ENCODE measurements at regions of chr17 and their contacts with region 1.

Region 1: DNA sequence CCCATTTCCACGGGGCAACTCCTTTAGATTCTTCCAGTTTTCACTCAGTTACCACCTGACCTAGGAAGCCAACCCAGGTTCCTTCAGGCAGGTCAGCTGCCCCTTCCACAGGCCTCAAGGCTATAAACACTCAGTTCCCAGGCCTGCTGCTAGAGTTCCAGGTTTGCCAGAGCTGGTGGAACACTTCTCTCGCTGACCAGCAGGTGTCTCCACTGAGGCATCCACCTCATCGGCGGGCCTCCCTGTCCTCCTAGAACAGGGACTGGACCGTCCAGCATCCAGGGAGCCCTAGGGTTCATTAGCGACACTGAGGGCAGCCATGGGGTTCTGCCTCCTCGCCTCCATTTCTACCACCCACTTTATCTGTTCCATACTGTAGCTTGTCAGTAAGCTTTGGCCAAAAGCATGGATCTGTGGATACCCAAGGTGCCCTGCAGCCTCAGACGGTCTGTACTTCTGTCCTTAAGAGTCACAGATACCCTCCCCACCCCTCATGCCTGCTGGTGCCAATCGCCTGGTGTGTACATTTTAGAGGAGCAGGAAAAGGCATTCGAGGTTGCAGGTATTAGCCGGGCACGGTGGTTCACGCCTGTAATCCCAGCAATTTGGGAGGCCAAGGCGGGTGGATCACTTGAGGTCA is 29.0 kb downstream of the PIMREG start:
- DNase-seq: peak; percentile 72
- H3K4me3 ChIP-seq: no peak overlapping the region
- H3K27ac ChIP-seq: no peak overlapping the region
- H3K4me1 ChIP-seq: peaks cover 15% of the 10 kb centered on the region
- H3K27me3 ChIP-seq: no peaks in the 10 kb centered on the region
- CTCF ChIP-seq: peak; percentile 95 to 97
- POLR2A ChIP-seq: no peak

Region 2: DNA sequence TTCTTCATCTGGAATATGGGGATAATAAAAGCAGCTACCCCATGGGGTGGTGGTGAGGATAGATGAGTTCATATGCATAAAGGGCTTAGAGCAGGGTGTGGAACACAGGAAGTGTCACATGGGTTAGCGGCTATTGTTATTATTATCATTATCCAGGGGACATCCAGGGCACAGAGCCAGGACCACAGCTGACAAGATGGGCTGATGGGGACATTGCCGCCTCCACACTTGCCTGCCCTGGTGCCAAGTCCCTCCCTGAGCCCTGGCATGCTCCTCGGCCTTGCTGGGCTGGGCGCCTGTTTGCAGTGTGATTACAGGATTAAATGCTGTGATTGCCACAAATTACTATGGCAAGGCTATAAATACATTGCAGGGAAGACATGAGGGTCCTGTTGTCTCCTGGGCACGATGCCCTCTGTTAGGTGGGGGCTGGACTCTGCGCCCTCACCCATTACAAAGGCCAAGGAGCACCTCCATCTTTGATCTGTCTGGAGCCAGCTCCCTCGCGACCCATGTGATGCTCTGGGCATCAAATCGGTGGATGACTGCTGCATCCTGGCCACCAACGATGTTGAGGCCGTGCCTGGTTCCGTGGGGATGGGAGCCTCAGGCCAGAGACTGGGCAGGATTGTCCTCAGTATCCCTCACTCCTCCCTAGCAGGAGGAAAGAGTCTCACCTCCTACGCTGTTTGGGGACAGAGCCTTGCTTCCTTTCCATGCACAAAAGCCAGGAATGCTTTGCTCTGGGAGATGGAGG is 14.2 kb after region 1 on chr17:
- CTCF ChIA-PET with region 1: interaction called, 37 read pairs
- POLR2A ChIA-PET with region 1: no interaction called
- dilution Hi-C with region 1: no loop called
- intact Hi-C with region 1: no loop called
- DNase-seq: no peak
- H3K4me3 ChIP-seq: no peak overlapping the region
- H3K27ac ChIP-seq: no peak overlapping the region
- H3K4me1 ChIP-seq: no peaks in the 10 kb centered on the region
- H3K27me3 ChIP-seq: no peaks in the 10 kb centered on the region
- CTCF ChIP-seq: no peak
- POLR2A ChIP-seq: no peak

Region 3: DNA sequence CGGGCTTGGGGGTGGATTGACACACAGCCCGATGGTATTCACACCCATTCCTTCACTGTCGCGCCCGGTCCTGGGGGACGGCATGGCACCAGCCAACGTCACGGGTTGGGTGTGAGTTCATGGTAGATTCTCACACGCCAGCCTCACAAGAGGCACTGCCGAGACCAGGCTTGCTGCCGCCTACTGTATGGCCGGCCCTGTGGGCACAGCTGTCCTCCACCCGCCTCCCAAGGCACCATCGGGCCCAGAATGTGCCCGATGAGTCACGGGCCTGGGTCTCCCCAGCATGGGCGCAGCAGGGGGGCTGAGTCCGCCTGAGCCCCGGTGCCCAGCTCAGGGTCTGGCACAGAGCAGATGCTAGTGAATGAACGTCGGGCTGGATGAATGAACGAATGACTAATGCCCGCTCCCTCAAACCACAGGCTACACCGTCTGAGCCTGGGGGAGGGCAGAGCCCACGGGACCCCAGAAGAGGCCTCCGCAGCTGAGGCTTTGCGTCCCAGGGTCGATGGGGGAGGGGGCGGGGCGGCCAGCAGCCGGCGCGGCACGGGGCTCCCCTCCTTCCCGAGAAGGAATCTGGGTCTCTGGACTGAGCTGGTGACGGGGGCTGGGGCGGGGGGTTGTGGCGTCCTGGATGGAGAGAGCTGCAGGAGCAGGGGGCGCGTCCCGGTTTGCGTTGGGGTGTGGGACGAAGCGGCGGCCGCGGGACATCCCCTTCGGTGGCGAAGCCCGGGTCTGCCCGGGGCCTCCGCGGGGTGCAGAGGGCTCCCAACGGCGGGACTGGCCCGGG is 82.3 kb after region 1 on chr17:
- CTCF ChIA-PET with region 1: interaction called, 29 read pairs
- POLR2A ChIA-PET with region 1: no interaction called
- dilution Hi-C with region 1: no loop called
- intact Hi-C with region 1: loop called (anchors 1 kb)
- DNase-seq: peak; percentile 38
- H3K4me3 ChIP-seq: peak overlapping the region; percentile 3 to 42 (median 36)
- H3K27ac ChIP-seq: no peak overlapping the region
- H3K4me1 ChIP-seq: peaks cover 3% of the 10 kb centered on the region
- H3K27me3 ChIP-seq: peaks cover 9 to 18% of the 10 kb centered on the region in 2 experiments
- CTCF ChIP-seq: no peak
- POLR2A ChIP-seq: no peak

Region 4: DNA sequence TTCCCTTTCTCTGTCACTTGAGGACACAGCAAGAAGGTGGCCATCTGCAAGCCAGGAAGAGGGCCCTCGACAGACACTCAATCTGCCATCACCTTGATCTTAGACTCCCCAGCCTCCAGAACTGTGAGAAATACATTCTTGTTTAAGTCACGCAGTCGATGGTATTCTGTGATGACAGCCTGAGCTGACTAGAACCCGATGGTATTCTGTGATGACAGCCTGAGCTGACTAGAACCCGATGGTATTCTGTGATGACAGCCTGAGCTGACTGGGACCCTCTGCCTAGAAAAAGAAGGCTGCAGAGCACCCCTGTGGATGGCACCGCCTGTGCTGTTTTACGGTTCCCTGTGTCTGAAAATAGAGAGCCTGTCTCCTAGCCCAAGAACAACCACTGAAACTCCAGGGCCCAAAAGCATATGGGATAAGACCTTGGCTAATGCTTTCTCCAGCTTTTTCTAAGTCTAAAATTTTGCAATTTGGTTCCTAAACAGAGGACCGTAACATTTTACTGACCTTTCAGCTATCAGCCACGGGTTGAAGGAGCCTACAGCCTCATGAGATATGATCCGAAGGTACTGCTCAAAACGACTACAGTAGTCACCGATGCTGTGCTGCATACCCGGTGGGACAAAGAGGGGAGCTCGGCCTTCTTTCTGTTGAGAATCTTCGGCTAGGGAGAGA is 116.2 kb after region 1 on chr17:
- CTCF ChIA-PET with region 1: interaction called, 10 read pairs
- POLR2A ChIA-PET with region 1: no interaction called
- dilution Hi-C with region 1: no loop called
- intact Hi-C with region 1: no loop called
- DNase-seq: no peak
- H3K4me3 ChIP-seq: no peak overlapping the region
- H3K27ac ChIP-seq: no peak overlapping the region
- H3K4me1 ChIP-seq: no peaks in the 10 kb centered on the region
- H3K27me3 ChIP-seq: no peaks in the 10 kb centered on the region
- CTCF ChIP-seq: no peak
- POLR2A ChIP-seq: no peak

Region 5: GRCh38 chr17:6623941-6624340 is 150.7 kb after region 1 on chr17:
- CTCF ChIA-PET with region 1: interaction called, 4 read pairs
- POLR2A ChIA-PET with region 1: no interaction called
- dilution Hi-C with region 1: no loop called
- intact Hi-C with region 1: loop called (anchors 5 kb)
- DNase-seq: no peak
- H3K4me3 ChIP-seq: no peak overlapping the region
- H3K27ac ChIP-seq: no peak overlapping the region
- H3K4me1 ChIP-seq: peaks cover 12% of the 10 kb centered on the region
- H3K27me3 ChIP-seq: no peaks in the 10 kb centered on the region
- CTCF ChIP-seq: no peak
- POLR2A ChIP-seq: no peak

Region 6: DNA sequence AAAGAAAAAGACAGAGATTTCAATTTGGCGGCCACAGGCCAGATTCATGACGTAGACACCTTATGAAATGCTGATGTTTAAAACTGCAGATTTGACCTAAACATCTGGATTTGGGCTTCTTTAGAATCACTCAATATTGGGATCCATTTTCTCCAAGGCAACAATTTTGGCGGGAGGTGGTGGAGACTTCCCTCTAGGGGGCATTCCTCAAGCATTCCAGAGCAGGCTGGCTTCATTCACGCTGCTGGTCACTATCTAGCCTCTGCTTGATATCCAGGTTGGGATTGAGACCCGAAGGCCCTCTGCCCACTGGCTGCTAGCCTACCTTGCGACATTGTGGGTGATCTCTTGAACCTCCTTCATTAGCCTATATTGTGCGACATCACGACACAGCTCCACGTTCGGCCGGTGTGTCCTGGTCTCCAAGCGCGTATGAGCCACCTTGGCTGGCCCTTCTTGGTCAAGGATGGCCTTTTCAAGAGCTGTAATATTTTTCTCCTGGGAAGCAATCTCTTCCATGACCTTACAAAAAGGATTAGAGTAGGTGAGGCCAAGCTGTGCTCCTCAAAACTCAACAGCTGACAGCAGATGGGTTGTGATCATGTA is 327.3 kb after region 1 on chr17:
- CTCF ChIA-PET with region 1: no interaction called
- POLR2A ChIA-PET with region 1: no interaction called
- dilution Hi-C with region 1: no loop called
- intact Hi-C with region 1: loop called (anchors 2 kb)
- DNase-seq: peak; percentile 28
- H3K4me3 ChIP-seq: no peak overlapping the region
- H3K27ac ChIP-seq: no peak overlapping the region
- H3K4me1 ChIP-seq: no peaks in the 10 kb centered on the region
- H3K27me3 ChIP-seq: peaks cover 2 to 6% of the 10 kb centered on the region in 2 experiments
- CTCF ChIP-seq: peak; percentile 18 to 66
- POLR2A ChIP-seq: no peak

Measured in endothelial cell of umbilical vein (primary cell).